ENCODE measurements at regions of chr7 and their contacts with region 1.

Region 1: GRCh38 chr7:127392566-127393367 is at the start of gene ZNF800:
- DNase-seq: peak; percentile 76 to 94 (median 86)
- ATAC-seq: peak; percentile 74 to 79
- H3K4me3 Mint-ChIP-seq: peak within 1 kb of the TSS; percentile 90 to 100 (median 98)
- H3K27ac Mint-ChIP-seq: peak within 1 kb of the TSS; percentile 95 to 99 (median 98)
- H3K4me1 Mint-ChIP-seq: peaks cover 27 to 71% (median 60%) of the 10 kb centered on the region in 4 donors
- H3K27me3 Mint-ChIP-seq: no peaks in the 10 kb centered on the region
- polyA plus RNA-seq, gene ZNF800: 50.0 to 61.3 (median 55.0) TPM

Region 2: GRCh38 chr7:127347567-127348246 is 45.1 kb before region 1 on chr7:
- POLR2A ChIA-PET with region 1: interaction called, 28 read pairs
- DNase-seq: peak; percentile 59 to 76 (median 72)
- ATAC-seq: peak; percentile 97 to 99
- H3K4me3 Mint-ChIP-seq: peak overlapping the region; percentile 64 to 88 (median 76)
- H3K27ac Mint-ChIP-seq: peak overlapping the region in 2 of 10 donors; percentile 39 to 79
- H3K4me1 Mint-ChIP-seq: peaks cover 12 to 37% (median 14%) of the 10 kb centered on the region in 4 donors
- H3K27me3 Mint-ChIP-seq: no peaks in the 10 kb centered on the region

Region 3: GRCh38 chr7:127404286-127405072 is 11.7 kb after region 1 on chr7:
- POLR2A ChIA-PET with region 1: interaction called, 52 read pairs
- DNase-seq: peak in 2 of 10 donors; percentile 29 to 41
- ATAC-seq: peak; percentile 80 to 83
- H3K4me3 Mint-ChIP-seq: peak overlapping the region; percentile 1 to 76 (median 62)
- H3K27ac Mint-ChIP-seq: peak overlapping the region; percentile 63 to 94 (median 81)
- H3K4me1 Mint-ChIP-seq: peaks cover 18 to 39% (median 36%) of the 10 kb centered on the region in 4 donors
- H3K27me3 Mint-ChIP-seq: peaks cover 0 to 7% (median 0%) of the 10 kb centered on the region in 5 donors

Region 4: DNA sequence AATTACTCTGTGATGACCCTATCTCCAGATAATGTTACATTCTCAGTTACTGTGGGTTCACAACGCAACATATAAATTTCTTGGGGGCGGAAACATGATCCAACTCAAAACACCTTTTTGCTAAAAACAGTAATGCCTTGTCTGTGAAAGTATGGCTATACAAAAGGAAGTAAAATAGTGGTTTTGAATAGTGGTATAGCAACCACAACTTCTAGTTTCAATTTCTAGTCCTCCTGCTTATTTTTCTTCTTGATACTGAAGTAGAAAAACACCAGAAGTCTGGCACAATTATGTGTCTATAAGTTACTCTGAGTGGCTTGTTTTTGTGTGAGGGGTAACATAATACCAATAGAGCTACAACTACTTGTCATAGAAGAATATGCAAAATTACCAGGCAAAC is 21.2 kb after region 1 on chr7:
- POLR2A ChIA-PET with region 1: interaction called, 115 read pairs
- DNase-seq: peak in 3 of 10 donors; percentile 53 to 78 (median 73)
- ATAC-seq: peak; percentile 88
- H3K4me3 Mint-ChIP-seq: peak overlapping the region; percentile 40 to 87 (median 72)
- H3K27ac Mint-ChIP-seq: peak overlapping the region; percentile 92 to 99 (median 94)
- H3K4me1 Mint-ChIP-seq: peaks cover 27 to 81% (median 76%) of the 10 kb centered on the region in 4 donors
- H3K27me3 Mint-ChIP-seq: no peaks in the 10 kb centered on the region

Region 5: GRCh38 chr7:127437852-127438251 is 45.1 kb after region 1 on chr7:
- POLR2A ChIA-PET with region 1: interaction called, 15 read pairs
- DNase-seq: no peak
- ATAC-seq: no peak
- H3K4me3 Mint-ChIP-seq: no peak overlapping the region
- H3K27ac Mint-ChIP-seq: no peak overlapping the region
- H3K4me1 Mint-ChIP-seq: peaks cover 0 to 2% (median 0%) of the 10 kb centered on the region in 4 donors
- H3K27me3 Mint-ChIP-seq: peaks cover 0 to 4% (median 0%) of the 10 kb centered on the region in 5 donors

Region 6: DNA sequence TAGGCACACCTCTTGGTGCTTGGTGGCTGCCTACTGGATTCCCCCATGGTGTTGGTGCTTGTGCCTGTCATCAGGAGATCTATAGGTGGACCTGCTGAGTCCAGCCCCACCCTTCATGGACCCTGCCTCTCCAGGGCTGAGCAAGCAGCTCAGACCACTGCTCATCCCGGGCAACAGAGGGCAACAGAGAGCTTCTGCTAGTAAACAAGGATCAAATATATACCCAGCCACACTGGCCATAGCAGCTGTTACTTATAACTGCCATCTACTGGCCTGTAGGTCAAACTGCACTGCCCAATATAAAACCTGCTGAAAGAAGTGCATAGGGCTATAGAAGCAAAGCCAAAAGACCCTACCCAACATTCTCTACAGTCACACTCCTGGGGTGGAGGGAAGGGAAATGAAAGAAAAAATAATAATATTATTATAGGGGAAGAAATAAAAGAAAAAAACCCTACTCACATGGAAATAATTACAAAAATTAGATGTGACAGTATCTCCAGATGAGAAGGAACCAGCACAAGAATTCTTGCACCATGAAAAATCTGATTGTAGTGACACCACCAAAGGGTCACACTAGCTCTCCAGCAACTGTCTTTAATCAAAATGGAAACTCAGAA is 54.7 kb after region 1 on chr7:
- POLR2A ChIA-PET with region 1: interaction called, 53 read pairs
- DNase-seq: peak; percentile 16 to 80 (median 50)
- ATAC-seq: peak; percentile 95 to 98
- H3K4me3 Mint-ChIP-seq: no peak overlapping the region
- H3K27ac Mint-ChIP-seq: peak overlapping the region in 2 of 10 donors; percentile 51 to 55
- H3K4me1 Mint-ChIP-seq: peaks cover 16 to 25% (median 23%) of the 10 kb centered on the region in 4 donors
- H3K27me3 Mint-ChIP-seq: peaks cover 0 to 23% (median 0%) of the 10 kb centered on the region in 5 donors

Region 7: GRCh38 chr7:127585044-127585953 is 192.5 kb after region 1 on chr7 and contains the start of gene GCC1:
- POLR2A ChIA-PET with region 1: interaction called, 10 read pairs
- DNase-seq: peak; percentile 87 to 97 (median 94)
- ATAC-seq: peak; percentile 72 to 80
- H3K4me3 Mint-ChIP-seq: peak within 1 kb of the TSS; percentile 91 to 95 (median 92)
- H3K27ac Mint-ChIP-seq: peak within 1 kb of the TSS; percentile 85 to 97 (median 96)
- H3K4me1 Mint-ChIP-seq: peaks cover 40 to 83% (median 80%) of the 10 kb centered on the region in 4 donors
- H3K27me3 Mint-ChIP-seq: no peaks in the 10 kb centered on the region
- polyA plus RNA-seq, gene GCC1: 7.9 to 14.5 (median 8.0) TPM

Measured in naive thymus-derived CD8-positive, alpha-beta T cell (primary cell).